Activated CD4-positive, alpha-beta T cell treated with anti-CD3 and anti-CD28 coated beads, Interleukin-2, amount 10 ng/mL, durations not matched to agents 24 days and 14 days (primary cell): ENCODE measurements at regions of chr1 and their contacts with region 1.

Region 1: DNA sequence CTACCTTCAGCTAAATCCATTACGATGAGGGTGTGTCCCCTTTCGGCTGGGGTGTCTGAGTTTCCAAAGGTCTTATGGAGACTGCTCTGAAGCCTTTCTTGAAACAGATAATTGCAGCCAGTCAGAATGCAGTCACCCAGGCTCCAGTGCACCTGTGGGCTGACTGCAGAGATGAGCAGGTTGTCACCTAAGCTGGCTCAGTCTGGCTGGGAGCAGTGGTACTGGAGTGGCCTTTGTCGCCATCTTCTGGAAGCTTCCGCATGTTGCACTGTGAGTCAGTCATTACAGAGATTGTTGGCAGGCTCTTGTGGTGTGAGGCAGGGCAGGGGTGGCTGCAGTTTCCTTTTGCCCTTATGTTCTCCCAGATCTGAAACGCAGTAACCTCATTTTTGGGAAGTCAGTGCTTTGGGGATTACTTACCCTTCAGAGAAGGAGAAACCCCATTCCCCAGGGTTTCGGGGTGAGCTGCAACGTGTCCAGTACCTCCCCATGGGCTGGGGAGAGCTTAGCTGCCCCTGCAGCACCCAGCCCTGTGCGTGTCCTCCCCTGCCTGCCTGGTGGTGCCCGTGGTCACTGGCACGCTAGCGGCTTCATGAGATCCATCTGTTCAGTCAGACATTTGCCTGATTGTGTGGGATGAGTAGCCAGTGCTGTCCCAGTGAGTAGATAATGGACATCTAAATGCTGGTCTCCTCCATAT is 48.0 kb downstream of the SMYD2 start:
- DNase-seq: peak; percentile 94
- H3K4me3 Mint-ChIP-seq: no peak overlapping the region
- H3K27ac Mint-ChIP-seq: no peak overlapping the region
- H3K4me1 Mint-ChIP-seq: peaks cover 7% of the 10 kb centered on the region
- H3K27me3 Mint-ChIP-seq: no peaks in the 10 kb centered on the region

Region 2: DNA sequence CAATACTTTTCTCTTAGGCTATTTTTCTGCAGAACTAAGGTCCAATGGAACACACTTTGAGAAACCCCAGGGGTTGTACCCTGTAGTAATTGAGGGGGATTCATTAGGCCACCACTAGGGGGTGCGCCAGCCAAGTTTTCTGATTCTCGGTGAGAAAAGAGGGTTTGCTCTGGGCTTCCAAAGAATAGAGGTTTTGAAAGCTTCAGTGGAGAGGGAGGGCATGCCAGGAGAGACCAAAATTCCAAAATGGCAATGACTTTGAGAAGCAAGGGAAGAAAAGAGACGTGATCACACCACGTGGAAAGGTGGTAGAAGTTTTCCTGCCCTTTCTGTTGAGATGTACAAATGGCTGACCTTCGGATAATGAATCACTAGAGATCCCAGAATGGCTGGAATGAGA is 954.6 kb before region 1 on chr1:
- intact Hi-C with region 1: loop called (anchors 10 kb)
- DNase-seq: peak; percentile 85
- H3K4me3 Mint-ChIP-seq: no peak overlapping the region
- H3K27ac Mint-ChIP-seq: no peak overlapping the region
- H3K4me1 Mint-ChIP-seq: no peaks in the 10 kb centered on the region
- H3K27me3 Mint-ChIP-seq: peaks cover 7% of the 10 kb centered on the region

Region 3: DNA sequence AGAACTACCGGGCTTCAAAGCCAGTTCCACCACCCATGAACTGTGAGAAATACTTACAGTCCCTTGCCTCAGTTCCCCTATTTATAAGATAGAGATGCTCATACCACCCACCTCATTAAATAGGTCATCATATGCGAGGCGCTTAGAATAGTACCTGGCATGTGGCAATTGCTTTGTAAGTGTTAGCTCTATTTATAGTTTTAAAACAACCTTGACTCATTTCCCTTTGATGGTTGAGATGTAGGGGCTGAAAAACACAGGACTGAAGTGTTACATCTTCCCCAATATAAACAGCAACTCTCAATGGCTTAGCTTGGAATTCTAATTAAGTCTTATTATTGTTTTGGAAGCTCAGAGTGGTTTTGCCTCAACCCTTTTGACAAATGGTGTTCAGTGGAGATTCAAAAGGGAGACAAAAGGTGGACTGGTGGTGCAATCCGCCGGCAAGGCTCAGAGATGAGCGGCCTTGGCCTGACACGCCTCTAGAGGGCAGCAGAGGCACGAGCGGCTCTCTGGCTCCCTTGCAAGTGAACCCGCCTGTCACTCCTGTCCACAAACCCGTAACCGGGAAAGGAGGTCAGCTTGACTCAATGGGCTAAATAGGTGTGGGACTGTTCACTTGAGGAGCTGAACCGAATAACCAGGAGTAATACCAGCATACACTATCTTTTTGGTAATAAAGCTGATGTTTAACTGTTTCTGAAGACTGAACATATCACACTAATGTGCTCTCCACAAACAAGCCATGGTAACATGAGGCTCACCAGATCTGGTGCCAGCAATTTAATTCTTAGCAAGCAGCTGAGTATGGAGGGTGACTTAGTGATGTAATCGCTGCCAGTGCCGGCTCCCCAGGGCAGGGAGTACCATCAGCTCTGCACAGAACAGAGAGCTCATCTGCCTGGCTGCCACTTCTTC is 67.5 kb before region 1 on chr1:
- intact Hi-C with region 1: loop called (anchors 1 kb)
- DNase-seq: peak; percentile 95
- H3K4me3 Mint-ChIP-seq: no peak overlapping the region
- H3K27ac Mint-ChIP-seq: no peak overlapping the region
- H3K4me1 Mint-ChIP-seq: peaks cover 19% of the 10 kb centered on the region
- H3K27me3 Mint-ChIP-seq: peaks cover 55% of the 10 kb centered on the region

Region 4: GRCh38 chr1:214386747-214387146 is 57.8 kb after region 1 on chr1:
- intact Hi-C with region 1: loop called (anchors 5 kb)
- DNase-seq: peak; percentile 76
- H3K4me3 Mint-ChIP-seq: peak overlapping the region; percentile 53
- H3K27ac Mint-ChIP-seq: peak overlapping the region; percentile 84
- H3K4me1 Mint-ChIP-seq: peaks cover 28% of the 10 kb centered on the region
- H3K27me3 Mint-ChIP-seq: no peaks in the 10 kb centered on the region

Region 5: DNA sequence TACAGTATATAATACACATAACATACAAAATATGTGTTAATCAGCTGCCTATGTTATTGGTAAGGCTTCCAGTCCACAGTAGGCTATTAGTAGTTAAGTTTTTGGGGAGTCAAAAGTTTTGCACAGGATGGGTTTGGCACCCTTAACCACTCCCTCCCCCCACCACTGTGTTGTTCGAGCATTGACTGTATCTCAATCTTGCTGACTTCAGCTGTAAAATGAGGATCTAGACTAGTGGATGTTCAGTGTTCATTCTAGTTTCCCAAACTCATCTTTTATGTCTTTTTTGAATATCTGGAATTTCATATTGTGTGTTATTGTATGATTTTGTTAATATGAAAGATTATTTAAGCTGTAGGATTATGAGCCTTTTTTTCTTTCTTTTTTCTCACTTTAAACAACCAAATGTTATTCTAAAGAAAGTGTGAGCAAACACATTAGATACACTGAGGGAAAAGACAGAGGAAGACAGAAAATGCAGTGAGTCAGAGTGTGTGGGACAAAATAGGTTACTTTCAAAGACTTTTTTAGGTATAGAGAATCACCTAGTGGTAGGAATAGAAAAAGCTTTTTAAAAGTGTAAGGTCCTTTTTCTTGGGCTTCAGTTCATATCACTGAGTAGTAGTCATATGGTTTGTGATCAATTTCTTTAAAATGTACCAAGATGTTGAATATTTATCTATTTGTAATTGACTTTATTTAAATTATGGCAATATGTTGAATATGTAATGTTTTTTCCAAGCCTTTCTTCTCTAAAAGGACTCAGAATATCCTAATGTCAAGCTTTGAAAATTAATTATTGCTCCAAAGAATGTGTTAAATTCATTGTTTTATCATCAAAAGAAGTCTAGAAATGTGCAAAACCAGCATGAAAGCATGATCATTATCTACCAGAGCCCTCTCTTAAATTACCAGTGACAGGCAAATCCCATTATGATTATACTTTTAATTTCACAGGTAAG is 256.2 kb after region 1 on chr1:
- intact Hi-C with region 1: loop called (anchors 1 kb)
- DNase-seq: no peak
- H3K4me3 Mint-ChIP-seq: no peak overlapping the region
- H3K27ac Mint-ChIP-seq: peak overlapping the region; percentile 9
- H3K4me1 Mint-ChIP-seq: peaks cover 8% of the 10 kb centered on the region
- H3K27me3 Mint-ChIP-seq: peaks cover 2% of the 10 kb centered on the region

Region 6: GRCh38 chr1:214632091-214632490 is 303.2 kb after region 1 on chr1:
- intact Hi-C with region 1: loop called (anchors 2 kb)
- DNase-seq: peak; percentile 76
- H3K4me3 Mint-ChIP-seq: peak overlapping the region; percentile 22
- H3K27ac Mint-ChIP-seq: no peak overlapping the region
- H3K4me1 Mint-ChIP-seq: peaks cover 33% of the 10 kb centered on the region
- H3K27me3 Mint-ChIP-seq: no peaks in the 10 kb centered on the region

Region 7: DNA sequence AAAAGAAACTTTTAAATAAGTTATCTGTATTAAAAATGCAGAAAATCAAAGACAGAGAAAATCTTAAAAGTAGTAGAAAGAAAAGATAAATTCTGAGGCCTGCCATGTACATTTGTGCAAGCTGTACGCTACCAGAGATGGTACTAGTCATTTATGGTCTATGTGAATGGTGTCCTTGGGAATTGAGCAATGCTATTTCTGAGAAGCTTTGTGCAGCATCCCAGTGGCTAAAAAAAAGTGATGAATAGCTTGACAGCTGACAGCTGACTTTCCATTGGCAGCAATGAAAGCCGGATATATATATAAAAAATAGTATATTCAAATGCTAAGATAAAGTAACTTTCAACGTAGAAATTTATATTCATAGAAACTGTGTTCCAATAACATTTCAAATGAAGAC is 1179.4 kb after region 1 on chr1:
- intact Hi-C with region 1: no loop called
- DNase-seq: no peak
- H3K4me3 Mint-ChIP-seq: no peak overlapping the region
- H3K27ac Mint-ChIP-seq: no peak overlapping the region
- H3K4me1 Mint-ChIP-seq: no peaks in the 10 kb centered on the region
- H3K27me3 Mint-ChIP-seq: no peaks in the 10 kb centered on the region